PC-3 (cell line): ENCODE measurements at regions of chr10 and their contacts with region 1.

Region 1: DNA sequence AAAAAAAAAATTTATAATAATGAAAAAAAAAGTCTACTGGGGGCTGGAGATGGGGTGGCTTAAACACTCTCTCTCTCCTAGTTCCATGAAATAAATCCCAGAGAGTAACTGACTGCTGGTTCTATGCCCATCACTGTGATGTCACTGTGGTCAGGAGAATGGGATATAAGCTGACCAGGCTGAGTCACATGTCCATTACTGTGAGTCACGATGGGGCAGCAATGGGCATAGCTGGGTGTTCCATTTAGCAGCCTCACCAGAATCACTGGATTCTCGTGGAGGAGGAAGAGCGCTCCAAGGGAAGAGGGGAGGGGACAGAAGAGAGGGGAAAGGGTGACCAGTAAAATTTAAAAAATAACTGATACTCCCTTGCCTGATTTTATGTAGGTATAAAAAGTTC is 37.1 kb downstream of the MASTL start:
- DNase-seq: peak; percentile 82
- ATAC-seq: peak; percentile 98
- H3K4me3 ChIP-seq: no peak overlapping the region
- H3K27ac ChIP-seq: peak overlapping the region; percentile 43; the same call in 1 of the 2 replicates
- H3K4me1 ChIP-seq: peaks cover 5% of the 10 kb centered on the region; the same call in 1 of the 2 replicates
- H3K27me3 ChIP-seq: no peaks in the 10 kb centered on the region
- CTCF ChIP-seq: no peak

Region 2: DNA sequence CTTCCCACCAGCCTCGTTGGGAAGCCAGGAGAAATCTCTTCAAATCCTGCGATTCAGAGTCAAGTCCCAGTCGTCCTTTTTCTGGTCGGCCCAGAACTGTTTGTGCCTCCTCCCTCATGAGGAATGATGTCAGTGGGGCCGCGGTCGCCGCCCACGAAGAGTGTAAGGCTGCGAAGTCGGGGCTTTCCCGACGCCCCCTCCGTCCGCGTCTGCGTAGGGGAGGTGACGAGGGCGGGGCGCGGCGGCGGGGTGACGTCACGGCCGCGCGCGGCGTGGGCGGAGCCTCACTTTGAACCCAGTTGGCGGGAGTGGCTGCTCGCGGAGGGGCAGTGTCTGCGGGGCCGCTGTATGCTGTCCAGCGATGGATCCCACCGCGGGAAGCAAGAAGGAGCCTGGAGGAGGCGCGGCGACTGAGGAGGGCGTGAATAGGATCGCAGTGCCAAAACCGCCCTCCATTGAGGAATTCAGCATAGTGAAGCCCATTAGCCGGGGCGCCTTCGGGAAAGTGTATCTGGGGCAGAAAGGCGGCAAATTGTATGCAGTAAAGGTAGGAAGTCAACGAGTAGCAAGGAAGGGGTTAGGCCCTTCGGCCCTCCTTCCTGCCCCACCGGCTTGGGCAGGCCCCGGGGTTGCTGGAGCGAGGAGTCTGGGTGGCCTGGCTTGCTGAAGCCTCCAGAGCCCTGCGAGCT is 37.1 kb before region 1 on chr10 and contains the start of gene MASTL:
- CTCF ChIA-PET with region 1: interaction called, 4 read pairs
- POLR2A ChIA-PET with region 1: no interaction called
- intact Hi-C with region 1: loop called (anchors 5 kb)
- DNase-seq: peak; percentile 84
- ATAC-seq: peak; percentile 69
- H3K4me3 ChIP-seq: peak within 1 kb of the TSS; percentile 94
- H3K27ac ChIP-seq: peak within 1 kb of the TSS; percentile 94
- H3K4me1 ChIP-seq: peaks cover 26% of the 10 kb centered on the region
- H3K27me3 ChIP-seq: no peaks in the 10 kb centered on the region
- CTCF ChIP-seq: no peak
- total RNA-seq, gene MASTL: 18.6 and 21.2 TPM in 2 replicates

Region 3: DNA sequence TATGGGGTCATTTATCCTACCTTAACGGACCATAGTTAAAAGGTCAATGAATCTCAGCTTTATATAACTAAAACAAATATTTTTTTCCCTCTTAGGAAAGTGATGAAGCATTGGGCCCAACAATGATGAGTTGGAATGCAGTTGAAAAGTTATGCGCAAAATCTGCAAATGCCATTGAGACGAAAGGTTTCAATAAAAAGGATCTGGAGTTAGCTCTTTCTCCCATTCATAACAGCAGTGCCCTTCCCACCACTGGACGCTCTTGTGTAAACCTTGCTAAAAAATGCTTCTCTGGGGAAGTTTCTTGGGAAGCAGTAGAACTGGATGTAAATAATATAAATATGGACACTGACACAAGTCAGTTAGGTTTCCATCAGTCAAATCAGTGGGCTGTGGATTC is 22.4 kb before region 1 on chr10:
- CTCF ChIA-PET with region 1: no interaction called
- POLR2A ChIA-PET with region 1: no interaction called
- intact Hi-C with region 1: no loop called
- DNase-seq: no peak
- ATAC-seq: no peak
- H3K4me3 ChIP-seq: no peak overlapping the region
- H3K27ac ChIP-seq: no peak overlapping the region
- H3K4me1 ChIP-seq: no peaks in the 10 kb centered on the region
- H3K27me3 ChIP-seq: no peaks in the 10 kb centered on the region
- CTCF ChIP-seq: no peak

Region 4: GRCh38 chr10:27328946-27329345 is 136.7 kb after region 1 on chr10:
- CTCF ChIA-PET with region 1: no interaction called
- POLR2A ChIA-PET with region 1: no interaction called
- intact Hi-C with region 1: no loop called
- DNase-seq: no peak
- ATAC-seq: no peak
- H3K4me3 ChIP-seq: no peak overlapping the region
- H3K27ac ChIP-seq: no peak overlapping the region
- H3K4me1 ChIP-seq: no peaks in the 10 kb centered on the region
- H3K27me3 ChIP-seq: 0 out of 2 replicates have a peak, but pooled peaks cover 5% of the 10 kb centered on the region
- CTCF ChIP-seq: no peak